ENCODE measurements at regions of chr17 and their contacts with region 1.

Region 1: DNA sequence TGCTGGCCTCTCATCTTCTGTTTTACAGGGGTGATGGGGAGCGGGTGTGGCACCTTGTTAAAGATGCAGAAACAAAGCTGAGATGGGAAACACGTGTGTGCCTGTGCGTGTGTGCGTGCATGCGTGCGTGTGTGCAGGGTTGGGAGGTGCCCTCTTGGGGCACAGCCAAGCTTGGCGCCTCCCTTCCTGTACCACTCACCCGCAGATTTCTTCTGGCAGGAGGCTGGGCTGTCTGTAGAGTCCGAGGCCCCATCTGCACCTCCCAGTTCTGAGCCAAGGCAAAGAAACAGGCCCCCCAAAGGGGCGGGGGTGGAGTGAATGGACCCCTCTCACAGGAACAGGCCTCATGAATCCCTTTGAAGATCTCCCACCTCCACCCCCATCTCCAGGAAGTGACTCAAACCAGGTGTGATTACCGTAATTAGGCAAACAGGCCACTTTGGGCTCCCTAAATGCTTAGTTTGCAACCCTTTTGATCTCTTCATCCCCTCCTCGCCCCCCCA is 20.9 kb downstream of the TNS4 start:
- DNase-seq: peak; percentile 65 to 97 (median 82)
- ATAC-seq: peak; percentile 86
- H3K4me3 ChIP-seq: peak overlapping the region in 1 of 2 experiments; percentile 3
- H3K4me3 Mint-ChIP-seq: peak overlapping the region; percentile 50
- H3K27ac ChIP-seq: peak overlapping the region; percentile 65 to 93
- H3K27ac Mint-ChIP-seq: peak overlapping the region; percentile 98
- H3K4me1 ChIP-seq: peaks cover 37% of the 10 kb centered on the region
- H3K4me1 Mint-ChIP-seq: peaks cover 54% of the 10 kb centered on the region
- H3K27me3 ChIP-seq: no peaks in the 10 kb centered on the region
- H3K27me3 Mint-ChIP-seq: no peaks in the 10 kb centered on the region
- CTCF ChIP-seq: no peak

Region 2: GRCh38 chr17:39225959-39226683 is 1254.4 kb before region 1 on chr17:
- CTCF ChIA-PET with region 1: no interaction called
- POLR2A ChIA-PET with region 1: no interaction called
- intact Hi-C with region 1: no loop called
- DNase-seq: peak; percentile 22 to 80 (median 66)
- ATAC-seq: peak; percentile 93
- H3K4me3 ChIP-seq: peak overlapping the region; percentile 37 to 56
- H3K4me3 Mint-ChIP-seq: peak overlapping the region; percentile 80
- H3K27ac ChIP-seq: no peak overlapping the region
- H3K27ac Mint-ChIP-seq: no peak overlapping the region
- H3K4me1 ChIP-seq: peaks cover 6% of the 10 kb centered on the region
- H3K4me1 Mint-ChIP-seq: peaks cover 12% of the 10 kb centered on the region
- H3K27me3 ChIP-seq: peaks cover 4 to 16% of the 10 kb centered on the region in 2 experiments
- H3K27me3 Mint-ChIP-seq: peaks cover 21% of the 10 kb centered on the region
- CTCF ChIP-seq: no peak

Region 3: DNA sequence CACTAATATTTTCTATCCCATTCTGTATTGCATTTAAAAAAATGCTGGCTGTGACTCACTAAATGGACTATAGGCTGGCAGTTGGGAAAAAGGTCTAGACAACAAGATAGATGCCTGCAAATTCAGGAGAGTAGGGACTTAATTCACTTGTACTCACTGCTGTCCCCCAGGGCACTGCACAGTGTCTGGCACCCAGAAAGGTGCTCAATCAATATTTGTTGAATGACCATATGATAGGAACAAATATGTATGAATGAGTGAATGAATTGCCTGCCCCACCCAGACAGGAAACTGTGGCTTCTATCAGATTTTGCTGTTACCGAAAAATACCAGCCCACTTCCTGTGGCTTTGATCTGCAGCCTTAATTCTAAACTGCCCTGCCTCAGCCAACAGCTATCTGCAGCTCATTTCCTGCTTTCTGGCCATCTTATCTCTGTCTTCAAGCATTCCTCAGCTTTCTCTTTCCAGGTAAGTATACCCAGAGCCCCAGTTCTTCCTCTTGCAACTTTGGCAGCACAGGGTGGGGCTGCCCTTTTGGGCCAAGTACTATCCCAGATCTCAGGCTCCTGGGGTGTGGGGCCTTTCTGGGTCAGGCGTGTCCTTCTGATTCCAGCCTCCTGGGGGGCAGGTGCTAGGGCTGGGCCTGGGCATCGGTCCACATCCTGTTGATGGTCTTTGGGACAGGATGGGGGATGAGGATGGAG is 36.2 kb after region 1 on chr17:
- CTCF ChIA-PET with region 1: interaction called, 9 read pairs
- POLR2A ChIA-PET with region 1: interaction called, 10 read pairs
- intact Hi-C with region 1: loop called (anchors 1 kb)
- DNase-seq: peak in 8 of 9 experiments; percentile 55 to 93 (median 77)
- ATAC-seq: peak; percentile 69
- H3K4me3 ChIP-seq: peak overlapping the region; percentile 45 to 56
- H3K4me3 Mint-ChIP-seq: peak overlapping the region; percentile 83
- H3K27ac ChIP-seq: peak overlapping the region; percentile 18 to 22
- H3K27ac Mint-ChIP-seq: peak overlapping the region; percentile 95
- H3K4me1 ChIP-seq: peaks cover 46% of the 10 kb centered on the region
- H3K4me1 Mint-ChIP-seq: peaks cover 57% of the 10 kb centered on the region
- H3K27me3 ChIP-seq: no peaks in the 10 kb centered on the region
- H3K27me3 Mint-ChIP-seq: peaks cover 4% of the 10 kb centered on the region
- CTCF ChIP-seq: no peak

Region 4: GRCh38 chr17:40551879-40552768 is 71.6 kb after region 1 on chr17:
- CTCF ChIA-PET with region 1: interaction called, 7 read pairs
- POLR2A ChIA-PET with region 1: interaction called, 14 read pairs
- intact Hi-C with region 1: no loop called
- DNase-seq: peak in 6 of 9 experiments; percentile 28 to 65 (median 49)
- ATAC-seq: no peak
- H3K4me3 ChIP-seq: no peak overlapping the region
- H3K4me3 Mint-ChIP-seq: no peak overlapping the region
- H3K27ac ChIP-seq: no peak overlapping the region
- H3K27ac Mint-ChIP-seq: peak overlapping the region; percentile 94
- H3K4me1 ChIP-seq: peaks cover 99% of the 10 kb centered on the region
- H3K4me1 Mint-ChIP-seq: peaks cover 100% of the 10 kb centered on the region
- H3K27me3 ChIP-seq: no peaks in the 10 kb centered on the region
- H3K27me3 Mint-ChIP-seq: no peaks in the 10 kb centered on the region
- CTCF ChIP-seq: no peak

Region 5: GRCh38 chr17:40582328-40582901 is 101.9 kb after region 1 on chr17:
- CTCF ChIA-PET with region 1: no interaction called
- POLR2A ChIA-PET with region 1: no interaction called
- intact Hi-C with region 1: no loop called
- DNase-seq: peak; percentile 48 to 90 (median 77)
- ATAC-seq: peak; percentile 85
- H3K4me3 ChIP-seq: peak overlapping the region; percentile 15 to 17
- H3K4me3 Mint-ChIP-seq: peak overlapping the region; percentile 79
- H3K27ac ChIP-seq: peak overlapping the region; percentile 60 to 74
- H3K27ac Mint-ChIP-seq: peak overlapping the region; percentile 94
- H3K4me1 ChIP-seq: peaks cover 86% of the 10 kb centered on the region
- H3K4me1 Mint-ChIP-seq: peaks cover 95% of the 10 kb centered on the region
- H3K27me3 ChIP-seq: no peaks in the 10 kb centered on the region
- H3K27me3 Mint-ChIP-seq: no peaks in the 10 kb centered on the region
- CTCF ChIP-seq: no peak

Region 6: GRCh38 chr17:40608061-40608588 is 127.6 kb after region 1 on chr17:
- CTCF ChIA-PET with region 1: no interaction called
- POLR2A ChIA-PET with region 1: no interaction called
- intact Hi-C with region 1: loop called in 1 of 2 experiments (anchors 5 kb)
- DNase-seq: peak in 4 of 9 experiments; percentile 42 to 94 (median 76)
- ATAC-seq: peak; percentile 56
- H3K4me3 ChIP-seq: peak overlapping the region; percentile 22 to 43
- H3K4me3 Mint-ChIP-seq: peak overlapping the region; percentile 66
- H3K27ac ChIP-seq: peak overlapping the region; percentile 92 to 99
- H3K27ac Mint-ChIP-seq: peak overlapping the region; percentile 98
- H3K4me1 ChIP-seq: peaks cover 97% of the 10 kb centered on the region
- H3K4me1 Mint-ChIP-seq: peaks cover 96% of the 10 kb centered on the region
- H3K27me3 ChIP-seq: no peaks in the 10 kb centered on the region
- H3K27me3 Mint-ChIP-seq: no peaks in the 10 kb centered on the region
- CTCF ChIP-seq: no peak

Measured in CD8-positive, alpha-beta T cell (primary cell).